Activated CD8-positive, alpha-beta T cell treated with anti-CD3 and anti-CD28 coated beads for 36 hours (primary cell): ENCODE measurements at regions of chr12 and their contacts with region 1.

Region 1: GRCh38 chr12:9687228-9687627 is 17.7 kb downstream of the CLEC2D start:
- DNase-seq: peak; percentile 43
- ATAC-seq: peak; percentile 70
- H3K4me3 Mint-ChIP-seq: no peak overlapping the region
- H3K27ac Mint-ChIP-seq: peak overlapping the region; percentile 42
- H3K4me1 Mint-ChIP-seq: peaks cover 74% of the 10 kb centered on the region
- H3K27me3 Mint-ChIP-seq: no peaks in the 10 kb centered on the region
- CTCF ChIP-seq: no peak

Region 2: GRCh38 chr12:9702255-9702654 is 15.0 kb after region 1 on chr12:
- CTCF ChIA-PET with region 1: interaction called, 3 read pairs
- POLR2A ChIA-PET with region 1: interaction called, 15 read pairs
- intact Hi-C with region 1: no loop called
- DNase-seq: peak; percentile 80
- ATAC-seq: peak; percentile 58
- H3K4me3 Mint-ChIP-seq: peak overlapping the region; percentile 71
- H3K27ac Mint-ChIP-seq: peak overlapping the region; percentile 95
- H3K4me1 Mint-ChIP-seq: peaks cover 72% of the 10 kb centered on the region
- H3K27me3 Mint-ChIP-seq: no peaks in the 10 kb centered on the region
- CTCF ChIP-seq: no peak

Region 3: DNA sequence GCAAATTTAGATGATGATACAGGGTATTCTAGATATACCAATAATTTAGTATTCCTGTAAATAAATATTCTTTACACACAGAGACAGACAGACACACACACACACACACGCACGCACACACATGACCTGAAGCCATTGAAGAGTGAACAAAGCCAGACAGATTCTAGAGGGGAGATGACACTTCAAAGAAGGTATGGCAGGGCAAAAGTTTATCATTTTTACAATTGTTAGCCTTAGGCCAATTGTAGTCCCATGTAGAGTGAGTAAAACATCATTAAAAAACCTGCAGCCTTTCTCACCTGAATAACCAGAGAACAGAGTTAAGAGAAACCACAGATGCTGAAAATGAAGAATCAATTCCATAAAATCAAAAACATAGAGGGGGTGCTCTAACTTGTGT is 36.1 kb after region 1 on chr12:
- CTCF ChIA-PET with region 1: no interaction called
- POLR2A ChIA-PET with region 1: no interaction called
- intact Hi-C with region 1: no loop called
- DNase-seq: no peak
- ATAC-seq: no peak
- H3K4me3 Mint-ChIP-seq: no peak overlapping the region
- H3K27ac Mint-ChIP-seq: no peak overlapping the region
- H3K4me1 Mint-ChIP-seq: peaks cover 34% of the 10 kb centered on the region
- H3K27me3 Mint-ChIP-seq: peaks cover 4% of the 10 kb centered on the region
- CTCF ChIP-seq: no peak

Region 4: GRCh38 chr12:9851927-9852326 is 164.7 kb after region 1 on chr12:
- CTCF ChIA-PET with region 1: no interaction called
- POLR2A ChIA-PET with region 1: no interaction called
- intact Hi-C with region 1: no loop called
- DNase-seq: peak; percentile 32
- ATAC-seq: peak; percentile 49
- H3K4me3 Mint-ChIP-seq: no peak overlapping the region
- H3K27ac Mint-ChIP-seq: no peak overlapping the region
- H3K4me1 Mint-ChIP-seq: peaks cover 44% of the 10 kb centered on the region
- H3K27me3 Mint-ChIP-seq: no peaks in the 10 kb centered on the region
- CTCF ChIP-seq: no peak